B cell (primary cell): ENCODE measurements at regions of chr6 and their contacts with region 1.

Region 1: GRCh38 chr6:136607932-136608772 is 57.9 kb upstream of the MAP7 start:
- DNase-seq: peak; percentile 77
- ATAC-seq: peak; percentile 97
- H3K4me3 ChIP-seq: no peak overlapping the region
- H3K4me3 Mint-ChIP-seq: no peak overlapping the region
- H3K27ac ChIP-seq: no peak overlapping the region
- H3K27ac Mint-ChIP-seq: no peak overlapping the region
- H3K4me1 ChIP-seq: no peaks in the 10 kb centered on the region
- H3K4me1 Mint-ChIP-seq: peaks cover 3% of the 10 kb centered on the region
- H3K27me3 ChIP-seq: no peaks in the 10 kb centered on the region
- H3K27me3 Mint-ChIP-seq: no peaks in the 10 kb centered on the region
- CTCF ChIP-seq: peak; percentile 90

Region 2: GRCh38 chr6:136123468-136123867 is 484.7 kb before region 1 on chr6:
- CTCF ChIA-PET with region 1: no interaction called
- POLR2A ChIA-PET with region 1: no interaction called
- intact Hi-C with region 1: no loop called
- DNase-seq: no peak
- ATAC-seq: no peak
- H3K4me3 ChIP-seq: no peak overlapping the region
- H3K4me3 Mint-ChIP-seq: no peak overlapping the region
- H3K27ac ChIP-seq: no peak overlapping the region
- H3K27ac Mint-ChIP-seq: no peak overlapping the region
- H3K4me1 ChIP-seq: no peaks in the 10 kb centered on the region
- H3K4me1 Mint-ChIP-seq: no peaks in the 10 kb centered on the region
- H3K27me3 ChIP-seq: no peaks in the 10 kb centered on the region
- H3K27me3 Mint-ChIP-seq: no peaks in the 10 kb centered on the region
- CTCF ChIP-seq: no peak

Region 3: GRCh38 chr6:136737871-136738691 is 129.9 kb after region 1 on chr6:
- CTCF ChIA-PET with region 1: no interaction called
- POLR2A ChIA-PET with region 1: no interaction called
- intact Hi-C with region 1: no loop called
- DNase-seq: no peak
- ATAC-seq: no peak
- H3K4me3 ChIP-seq: no peak overlapping the region
- H3K4me3 Mint-ChIP-seq: no peak overlapping the region
- H3K27ac ChIP-seq: no peak overlapping the region
- H3K27ac Mint-ChIP-seq: no peak overlapping the region
- H3K4me1 ChIP-seq: peaks cover 0 to 2% of the 10 kb centered on the region in 2 donors
- H3K4me1 Mint-ChIP-seq: peaks cover 46% of the 10 kb centered on the region
- H3K27me3 ChIP-seq: no peaks in the 10 kb centered on the region
- H3K27me3 Mint-ChIP-seq: no peaks in the 10 kb centered on the region
- CTCF ChIP-seq: no peak

Region 4: GRCh38 chr6:136927292-136927691 is 319.1 kb after region 1 on chr6:
- CTCF ChIA-PET with region 1: interaction called, 4 read pairs
- POLR2A ChIA-PET with region 1: no interaction called
- intact Hi-C with region 1: loop called (anchors 1 kb)
- DNase-seq: peak; percentile 22
- ATAC-seq: peak; percentile 33
- H3K4me3 ChIP-seq: no peak overlapping the region
- H3K4me3 Mint-ChIP-seq: no peak overlapping the region
- H3K27ac ChIP-seq: no peak overlapping the region
- H3K27ac Mint-ChIP-seq: no peak overlapping the region
- H3K4me1 ChIP-seq: peaks cover 17 to 18% of the 10 kb centered on the region in 2 donors
- H3K4me1 Mint-ChIP-seq: peaks cover 15% of the 10 kb centered on the region
- H3K27me3 ChIP-seq: peaks cover 0 to 36% (median 20%) of the 10 kb centered on the region in 4 experiments
- H3K27me3 Mint-ChIP-seq: peaks cover 33% of the 10 kb centered on the region
- CTCF ChIP-seq: peak; percentile 11